ENCODE measurements at regions of chr9 and their contacts with region 1.

Region 1: GRCh38 chr9:76651119-76651705 is 113.0 kb upstream of the PCA3 start:
- DNase-seq: no peak
- ATAC-seq: no peak
- H3K4me3 ChIP-seq: no peak overlapping the region
- H3K27ac ChIP-seq: no peak overlapping the region
- H3K4me1 ChIP-seq: peaks cover 13% of the 10 kb centered on the region
- H3K27me3 ChIP-seq: no peaks in the 10 kb centered on the region
- CTCF ChIP-seq: no peak
- POLR2A ChIP-seq: no peak
- RAD21 ChIP-seq: no peak

Region 2: GRCh38 chr9:76618762-76619161 is 32.5 kb before region 1 on chr9:
- CTCF ChIA-PET with region 1: no interaction called
- POLR2A ChIA-PET with region 1: no interaction called
- dilution Hi-C with region 1: no loop called
- in situ Hi-C with region 1: no loop called
- intact Hi-C with region 1: loop called (anchors 2 kb)
- DNase-seq: peak; percentile 38
- ATAC-seq: peak; percentile 60
- H3K4me3 ChIP-seq: no peak overlapping the region
- H3K27ac ChIP-seq: no peak overlapping the region; the same call in 1 of the 2 replicates
- H3K4me1 ChIP-seq: no peaks in the 10 kb centered on the region; the same call in 1 of the 2 replicates
- H3K27me3 ChIP-seq: no peaks in the 10 kb centered on the region; the same call in 1 of the 2 replicates
- CTCF ChIP-seq: no peak
- POLR2A ChIP-seq: no peak
- RAD21 ChIP-seq: no peak

Region 3: GRCh38 chr9:76634356-76635022 is 16.7 kb before region 1 on chr9:
- CTCF ChIA-PET with region 1: interaction called, 6 read pairs
- POLR2A ChIA-PET with region 1: interaction called, 10 read pairs
- dilution Hi-C with region 1: no loop called
- in situ Hi-C with region 1: no loop called
- intact Hi-C with region 1: no loop called
- DNase-seq: peak; percentile 81
- ATAC-seq: peak; percentile 89
- H3K4me3 ChIP-seq: no peak overlapping the region
- H3K27ac ChIP-seq: peak overlapping the region; percentile 20; the same call in 1 of the 2 replicates
- H3K4me1 ChIP-seq: peaks cover 7% of the 10 kb centered on the region; the same call in 1 of the 2 replicates
- H3K27me3 ChIP-seq: no peaks in the 10 kb centered on the region
- CTCF ChIP-seq: no peak
- POLR2A ChIP-seq: no peak
- RAD21 ChIP-seq: no peak

Region 4: GRCh38 chr9:76866689-76867088 is 215.5 kb after region 1 on chr9:
- CTCF ChIA-PET with region 1: no interaction called
- POLR2A ChIA-PET with region 1: no interaction called
- dilution Hi-C with region 1: no loop called
- in situ Hi-C with region 1: no loop called
- intact Hi-C with region 1: no loop called
- DNase-seq: peak; percentile 95
- ATAC-seq: peak; percentile 98
- H3K4me3 ChIP-seq: no peak overlapping the region
- H3K27ac ChIP-seq: peak overlapping the region; percentile 73
- H3K4me1 ChIP-seq: peaks cover 9% of the 10 kb centered on the region
- H3K27me3 ChIP-seq: no peaks in the 10 kb centered on the region
- CTCF ChIP-seq: no peak
- POLR2A ChIP-seq: no peak
- RAD21 ChIP-seq: no peak